CD8-positive, alpha-beta T cell (primary cell): ENCODE measurements at regions of chr6 and their contacts with region 1.

Region 1: DNA sequence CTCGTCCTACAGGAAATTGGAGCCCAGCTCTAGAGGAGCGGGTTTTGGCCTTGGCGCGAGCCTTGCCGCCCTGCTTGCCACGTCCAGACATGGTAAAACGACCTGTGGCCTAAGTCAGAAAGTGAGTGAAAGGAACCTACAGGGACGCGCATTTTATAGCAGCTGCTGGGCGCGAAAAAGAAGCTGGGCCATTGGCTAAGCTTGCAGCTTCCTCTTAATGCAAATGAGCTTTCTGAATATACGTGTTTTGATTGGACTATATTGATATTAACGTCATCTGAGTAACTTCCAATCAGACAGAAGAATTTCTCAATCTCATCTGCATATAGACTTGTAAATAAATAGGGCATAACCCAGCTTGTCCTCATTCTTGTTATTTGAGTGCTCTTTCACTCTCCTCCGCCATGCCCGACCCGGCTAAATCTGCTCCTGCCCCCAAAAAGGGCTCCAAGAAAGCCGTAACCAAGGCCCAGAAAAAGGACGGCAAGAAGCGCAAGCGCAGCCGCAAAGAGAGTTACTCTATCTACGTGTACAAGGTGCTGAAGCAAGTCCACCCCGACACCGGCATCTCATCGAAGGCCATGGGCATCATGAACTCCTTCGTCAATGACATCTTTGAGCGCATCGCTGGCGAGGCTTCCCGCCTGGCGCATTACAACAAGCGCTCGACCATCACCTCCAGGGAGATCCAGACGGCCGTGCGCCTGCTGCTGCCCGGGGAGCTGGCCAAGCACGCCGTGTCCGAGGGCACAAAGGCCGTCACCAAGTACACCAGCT is 18.9 kb downstream of the OR2B2 start:
- DNase-seq: peak; percentile 79 to 96 (median 85)
- ATAC-seq: peak; percentile 72
- H3K4me3 ChIP-seq: peak overlapping the region; percentile 66 to 81
- H3K4me3 Mint-ChIP-seq: no peak overlapping the region
- H3K27ac ChIP-seq: peak overlapping the region; percentile 70 to 88
- H3K27ac Mint-ChIP-seq: no peak overlapping the region
- H3K4me1 ChIP-seq: peaks cover 18% of the 10 kb centered on the region
- H3K4me1 Mint-ChIP-seq: peaks cover 29% of the 10 kb centered on the region
- H3K27me3 ChIP-seq: no peaks in the 10 kb centered on the region
- H3K27me3 Mint-ChIP-seq: no peaks in the 10 kb centered on the region
- CTCF ChIP-seq: no peak

Region 2: DNA sequence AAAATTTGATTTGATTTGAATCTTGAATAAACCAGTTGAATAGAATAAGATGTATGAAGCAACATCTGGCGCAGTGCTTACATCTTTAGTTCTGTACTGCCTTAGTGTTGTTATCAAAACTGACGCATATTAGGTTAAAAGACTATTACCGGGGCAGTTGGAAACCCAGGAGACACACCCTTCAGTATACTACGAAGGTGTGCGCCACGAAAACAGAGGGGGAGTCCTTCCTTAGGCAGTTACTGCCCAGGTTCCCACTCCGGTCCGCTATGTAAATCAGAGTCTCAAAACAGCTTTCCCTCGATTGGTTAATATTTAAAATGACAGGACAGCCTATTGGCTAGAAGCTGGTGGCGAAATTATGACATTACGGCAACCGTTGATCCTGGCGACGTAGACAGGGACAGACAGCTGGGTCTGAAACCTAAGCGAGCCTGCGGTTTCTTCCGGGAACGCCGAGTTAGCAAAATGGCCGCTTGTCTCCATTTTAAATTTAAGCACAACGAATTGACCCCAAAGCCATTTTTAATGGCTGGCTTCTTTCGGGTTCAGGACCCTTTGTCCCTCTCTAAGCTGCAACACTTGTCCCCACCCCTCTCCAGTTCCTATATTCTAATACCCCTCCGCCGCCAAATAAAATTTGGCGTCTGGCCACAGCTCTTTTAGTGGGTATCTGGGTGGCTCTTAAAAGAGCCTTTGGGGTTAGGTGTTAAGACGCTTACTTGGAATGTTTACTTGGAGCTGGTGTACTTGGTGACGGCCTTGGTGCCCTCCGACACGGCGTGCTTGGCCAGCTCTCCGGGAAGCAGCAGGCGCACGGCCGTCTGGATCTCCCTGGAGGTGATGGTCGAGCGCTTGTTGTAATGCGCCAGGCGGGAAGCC is 1770.2 kb before region 1 on chr6:
- CTCF ChIA-PET with region 1: no interaction called
- POLR2A ChIA-PET with region 1: interaction called, 27 read pairs
- intact Hi-C with region 1: loop called in 1 of 2 experiments (anchors 5 kb)
- DNase-seq: peak; percentile 73 to 99 (median 91)
- ATAC-seq: peak; percentile 54
- H3K4me3 ChIP-seq: peak overlapping the region; percentile 78 to 98
- H3K4me3 Mint-ChIP-seq: peak overlapping the region; percentile 94
- H3K27ac ChIP-seq: peak overlapping the region; percentile 87 to 94
- H3K27ac Mint-ChIP-seq: peak overlapping the region; percentile 99
- H3K4me1 ChIP-seq: peaks cover 20% of the 10 kb centered on the region
- H3K4me1 Mint-ChIP-seq: peaks cover 27% of the 10 kb centered on the region
- H3K27me3 ChIP-seq: no peaks in the 10 kb centered on the region
- H3K27me3 Mint-ChIP-seq: no peaks in the 10 kb centered on the region
- CTCF ChIP-seq: no peak

Region 3: DNA sequence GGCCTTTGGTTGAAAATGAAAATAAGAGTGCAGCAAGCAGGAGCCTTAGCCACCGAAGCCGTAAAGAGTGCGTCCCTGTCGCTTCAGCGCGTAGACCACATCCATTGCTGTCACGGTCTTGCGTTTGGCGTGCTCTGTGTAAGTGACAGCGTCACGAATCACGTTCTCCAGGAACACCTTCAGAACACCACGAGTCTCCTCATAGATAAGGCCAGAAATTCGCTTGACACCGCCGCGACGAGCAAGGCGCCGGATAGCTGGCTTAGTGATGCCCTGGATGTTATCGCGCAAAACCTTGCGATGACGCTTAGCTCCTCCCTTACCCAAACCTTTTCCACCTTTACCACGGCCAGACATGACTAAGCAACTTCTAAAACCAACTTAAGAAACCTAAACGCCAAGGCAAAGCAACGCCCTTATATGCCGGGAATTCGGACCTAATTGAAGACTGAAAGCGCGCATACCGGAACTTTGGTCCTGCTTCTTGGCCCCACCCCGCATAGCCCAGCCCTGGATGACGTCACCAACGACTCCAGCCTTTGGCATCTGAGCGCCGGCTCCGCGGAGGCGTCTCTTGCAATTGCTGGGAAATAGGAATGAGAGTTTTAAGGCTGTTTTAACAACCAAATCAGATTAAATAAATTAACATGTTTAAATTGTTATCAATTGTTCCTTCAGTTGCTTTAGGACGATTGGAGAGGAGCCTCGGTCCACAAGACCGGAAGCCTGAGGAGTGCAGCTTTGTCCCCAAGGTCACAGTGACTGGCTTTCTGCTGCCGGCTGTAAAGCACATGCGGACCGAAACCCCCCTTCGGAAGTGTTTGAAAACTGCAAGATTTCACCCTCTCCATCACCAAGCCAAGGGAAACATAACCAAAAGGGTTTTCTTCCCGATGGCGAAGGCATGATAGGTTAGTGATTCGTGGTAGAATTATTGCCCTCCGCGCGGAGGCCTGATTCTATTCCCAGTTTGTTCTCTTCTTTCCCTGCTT is 1607.8 kb before region 1 on chr6:
- CTCF ChIA-PET with region 1: no interaction called
- POLR2A ChIA-PET with region 1: interaction called, 9 read pairs
- intact Hi-C with region 1: loop called in 1 of 2 experiments (anchors 1 kb)
- DNase-seq: peak; percentile 83 to 99 (median 96)
- ATAC-seq: peak; percentile 82
- H3K4me3 ChIP-seq: peak overlapping the region; percentile 73 to 76
- H3K4me3 Mint-ChIP-seq: peak overlapping the region; percentile 91
- H3K27ac ChIP-seq: peak overlapping the region; percentile 89 to 96
- H3K27ac Mint-ChIP-seq: peak overlapping the region; percentile 97
- H3K4me1 ChIP-seq: peaks cover 14% of the 10 kb centered on the region
- H3K4me1 Mint-ChIP-seq: peaks cover 31% of the 10 kb centered on the region
- H3K27me3 ChIP-seq: no peaks in the 10 kb centered on the region
- H3K27me3 Mint-ChIP-seq: no peaks in the 10 kb centered on the region
- CTCF ChIP-seq: no peak

Region 4: DNA sequence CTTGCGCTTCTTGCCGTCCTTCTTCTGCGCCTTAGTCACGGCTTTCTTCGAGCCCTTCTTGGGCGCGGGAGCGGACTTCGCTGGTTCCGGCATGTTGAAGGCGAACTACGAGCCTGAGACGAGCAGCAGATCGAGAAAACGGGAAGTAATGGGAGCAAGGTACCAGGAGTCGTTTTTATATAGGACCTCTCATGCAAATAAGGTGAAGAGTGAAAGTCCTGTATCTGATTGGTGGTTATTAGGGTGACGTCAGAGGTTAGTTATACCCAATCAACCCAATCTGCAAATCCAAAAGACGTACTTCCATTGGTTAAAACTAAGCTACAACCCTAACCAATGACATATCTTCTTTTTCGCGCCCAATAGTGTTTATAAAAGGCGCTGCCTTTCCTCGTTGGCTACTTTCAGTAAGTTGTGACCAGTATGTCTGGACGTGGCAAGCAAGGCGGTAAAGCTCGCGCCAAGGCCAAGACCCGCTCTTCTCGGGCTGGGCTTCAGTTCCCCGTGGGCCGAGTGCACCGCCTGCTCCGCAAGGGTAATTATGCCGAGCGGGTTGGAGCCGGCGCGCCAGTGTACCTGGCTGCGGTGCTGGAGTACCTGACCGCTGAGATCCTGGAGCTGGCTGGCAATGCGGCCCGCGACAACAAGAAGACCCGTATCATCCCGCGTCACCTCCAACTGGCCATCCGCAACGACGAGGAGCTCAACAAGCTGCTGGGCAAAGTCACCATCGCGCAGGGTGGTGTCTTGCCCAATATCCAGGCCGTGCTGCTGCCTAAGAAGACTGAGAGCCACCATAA is 746.3 kb before region 1 on chr6:
- CTCF ChIA-PET with region 1: interaction called, 6 read pairs
- POLR2A ChIA-PET with region 1: interaction called, 64 read pairs
- intact Hi-C with region 1: loop called (anchors 1 kb)
- DNase-seq: peak; percentile 56 to 98 (median 74)
- ATAC-seq: peak; percentile 85
- H3K4me3 ChIP-seq: peak overlapping the region; percentile 71 to 77
- H3K4me3 Mint-ChIP-seq: no peak overlapping the region
- H3K27ac ChIP-seq: peak overlapping the region; percentile 84 to 91
- H3K27ac Mint-ChIP-seq: no peak overlapping the region
- H3K4me1 ChIP-seq: peaks cover 11% of the 10 kb centered on the region
- H3K4me1 Mint-ChIP-seq: peaks cover 13% of the 10 kb centered on the region
- H3K27me3 ChIP-seq: no peaks in the 10 kb centered on the region
- H3K27me3 Mint-ChIP-seq: no peaks in the 10 kb centered on the region
- CTCF ChIP-seq: no peak

Region 5: GRCh38 chr6:27472617-27473400 is 420.4 kb before region 1 on chr6 and contains the start of gene ZNF184:
- CTCF ChIA-PET with region 1: interaction called, 3 read pairs
- POLR2A ChIA-PET with region 1: interaction called, 26 read pairs
- intact Hi-C with region 1: loop called (anchors 2 kb)
- DNase-seq: peak; percentile 71 to 94 (median 84)
- ATAC-seq: peak; percentile 63
- H3K4me3 ChIP-seq: peak within 1 kb of the TSS; percentile 80 to 90
- H3K4me3 Mint-ChIP-seq: peak within 1 kb of the TSS; percentile 96
- H3K27ac ChIP-seq: peak within 1 kb of the TSS; percentile 94 to 96
- H3K27ac Mint-ChIP-seq: peak within 1 kb of the TSS; percentile 96
- H3K4me1 ChIP-seq: peaks cover 26% of the 10 kb centered on the region
- H3K4me1 Mint-ChIP-seq: peaks cover 48% of the 10 kb centered on the region
- H3K27me3 ChIP-seq: no peaks in the 10 kb centered on the region
- H3K27me3 Mint-ChIP-seq: no peaks in the 10 kb centered on the region
- CTCF ChIP-seq: no peak
- total RNA-seq, gene ZNF184: 31.8 to 32.9 TPM

Region 6: GRCh38 chr6:27553123-27553904 is 339.9 kb before region 1 on chr6:
- CTCF ChIA-PET with region 1: no interaction called
- POLR2A ChIA-PET with region 1: no interaction called
- intact Hi-C with region 1: no loop called
- DNase-seq: peak in 2 of 9 experiments; percentile 17 to 22
- ATAC-seq: no peak
- H3K4me3 ChIP-seq: no peak overlapping the region
- H3K4me3 Mint-ChIP-seq: no peak overlapping the region
- H3K27ac ChIP-seq: no peak overlapping the region
- H3K27ac Mint-ChIP-seq: no peak overlapping the region
- H3K4me1 ChIP-seq: peaks cover 4% of the 10 kb centered on the region
- H3K4me1 Mint-ChIP-seq: peaks cover 3% of the 10 kb centered on the region
- H3K27me3 ChIP-seq: peaks cover 51 to 55% of the 10 kb centered on the region in 2 experiments
- H3K27me3 Mint-ChIP-seq: peaks cover 70% of the 10 kb centered on the region
- CTCF ChIP-seq: no peak

Region 7: DNA sequence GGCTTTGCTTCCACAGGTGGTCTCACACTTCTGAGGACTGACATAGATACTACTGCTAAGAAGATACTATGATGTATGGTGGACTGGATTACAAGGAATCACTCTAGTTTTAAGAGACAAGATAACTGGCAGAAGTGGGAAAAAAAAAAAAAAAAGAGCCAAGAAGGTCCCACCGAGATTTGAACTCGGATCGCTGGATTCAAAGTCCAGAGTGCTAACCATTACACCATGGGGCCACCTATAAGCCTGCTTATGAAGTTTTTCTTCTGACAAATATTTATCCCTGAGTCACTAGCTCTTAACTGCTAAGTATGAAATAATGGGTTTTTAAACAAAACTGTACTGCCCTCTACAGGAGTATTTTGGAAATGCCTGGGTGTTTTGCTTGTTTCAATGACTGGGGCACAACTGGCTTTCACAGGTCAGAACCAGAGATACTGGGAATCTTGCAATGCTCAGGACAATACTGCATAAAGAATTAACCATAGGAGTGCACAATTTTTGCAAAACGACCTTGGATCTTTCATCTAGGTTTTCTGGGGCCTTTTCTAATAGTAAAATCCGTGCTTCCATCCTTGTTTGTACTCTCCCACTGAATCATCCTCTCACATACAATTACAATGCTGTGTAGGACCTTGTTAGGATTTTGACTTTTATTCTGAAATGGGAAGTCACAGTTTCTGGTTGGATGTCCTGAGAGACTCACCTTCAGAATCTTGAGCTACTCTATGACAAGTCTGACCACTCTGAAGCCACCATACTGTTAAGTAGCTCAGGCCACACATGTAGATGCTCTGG is 97.4 kb before region 1 on chr6:
- CTCF ChIA-PET with region 1: interaction called, 10 read pairs
- POLR2A ChIA-PET with region 1: interaction called, 9 read pairs
- intact Hi-C with region 1: loop called (anchors 1 kb)
- DNase-seq: peak in 5 of 9 experiments; percentile 35 to 88 (median 64)
- ATAC-seq: peak; percentile 75
- H3K4me3 ChIP-seq: no peak overlapping the region
- H3K4me3 Mint-ChIP-seq: no peak overlapping the region
- H3K27ac ChIP-seq: no peak overlapping the region
- H3K27ac Mint-ChIP-seq: peak overlapping the region; percentile 11
- H3K4me1 ChIP-seq: peaks cover 17% of the 10 kb centered on the region
- H3K4me1 Mint-ChIP-seq: peaks cover 22% of the 10 kb centered on the region
- H3K27me3 ChIP-seq: peaks cover 0 to 5% of the 10 kb centered on the region in 2 experiments
- H3K27me3 Mint-ChIP-seq: peaks cover 7% of the 10 kb centered on the region
- CTCF ChIP-seq: peak; percentile 80

Region 8: GRCh38 chr6:27924179-27924578 is 30.9 kb after region 1 on chr6:
- CTCF ChIA-PET with region 1: no interaction called
- POLR2A ChIA-PET with region 1: no interaction called
- intact Hi-C with region 1: no loop called
- DNase-seq: no peak
- ATAC-seq: no peak
- H3K4me3 ChIP-seq: no peak overlapping the region
- H3K4me3 Mint-ChIP-seq: no peak overlapping the region
- H3K27ac ChIP-seq: no peak overlapping the region
- H3K27ac Mint-ChIP-seq: no peak overlapping the region
- H3K4me1 ChIP-seq: no peaks in the 10 kb centered on the region
- H3K4me1 Mint-ChIP-seq: no peaks in the 10 kb centered on the region
- H3K27me3 ChIP-seq: peaks cover 4 to 6% of the 10 kb centered on the region in 2 experiments
- H3K27me3 Mint-ChIP-seq: peaks cover 25% of the 10 kb centered on the region
- CTCF ChIP-seq: no peak

Region 9: GRCh38 chr6:28136585-28137504 is 243.6 kb after region 1 on chr6:
- CTCF ChIA-PET with region 1: interaction called, 5 read pairs
- POLR2A ChIA-PET with region 1: no interaction called
- intact Hi-C with region 1: loop called in 1 of 2 experiments (anchors 2 kb)
- DNase-seq: peak; percentile 52 to 91 (median 77)
- ATAC-seq: peak; percentile 35
- H3K4me3 ChIP-seq: peak overlapping the region; percentile 79 to 88
- H3K4me3 Mint-ChIP-seq: peak overlapping the region; percentile 94
- H3K27ac ChIP-seq: peak overlapping the region; percentile 87 to 92
- H3K27ac Mint-ChIP-seq: peak overlapping the region; percentile 99
- H3K4me1 ChIP-seq: peaks cover 28% of the 10 kb centered on the region
- H3K4me1 Mint-ChIP-seq: peaks cover 71% of the 10 kb centered on the region
- H3K27me3 ChIP-seq: no peaks in the 10 kb centered on the region
- H3K27me3 Mint-ChIP-seq: no peaks in the 10 kb centered on the region
- CTCF ChIP-seq: no peak